ENCODE measurements at regions of chr12 and their contacts with region 1.

Region 1: DNA sequence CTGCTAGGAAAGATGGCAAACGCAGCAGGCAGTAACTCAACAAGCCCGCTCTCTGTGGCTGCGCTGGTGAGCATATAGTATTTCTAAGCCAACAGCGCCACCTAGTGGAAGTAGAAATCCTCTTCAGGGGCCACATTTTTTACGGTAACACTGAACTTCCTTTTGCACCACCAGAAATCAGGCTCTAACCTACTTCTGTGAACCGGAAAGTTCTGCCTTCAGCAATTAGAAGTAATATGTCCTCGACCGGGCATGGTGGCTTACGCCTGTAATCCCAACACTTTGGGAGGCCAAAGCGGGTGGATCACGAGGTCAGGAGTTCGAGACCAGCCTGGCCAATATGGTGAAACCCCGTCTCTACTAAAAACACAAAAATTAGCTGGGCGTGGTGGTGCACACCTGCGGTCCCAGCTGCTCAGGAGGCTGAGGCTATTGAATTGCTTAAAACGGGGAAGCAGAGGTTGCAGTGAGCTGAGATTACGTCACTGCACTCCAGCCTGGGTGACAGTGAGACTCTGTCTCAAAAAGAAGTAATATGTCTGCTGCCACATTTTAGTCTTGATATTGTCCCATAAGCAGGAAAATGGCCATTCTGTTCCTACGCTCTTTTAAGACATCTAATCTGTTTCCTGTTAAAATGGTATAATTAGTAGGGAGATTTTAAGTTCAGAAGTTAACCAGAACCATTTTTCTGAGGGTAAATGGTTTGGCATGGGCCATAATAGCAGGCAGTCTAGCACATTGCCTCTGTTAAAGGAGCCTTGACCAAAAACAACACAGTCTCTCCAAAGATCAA is 26.8 kb downstream of the APOBEC1 start:
- DNase-seq: peak; percentile 78 to 85 (median 83)
- H3K4me3 ChIP-seq: peak overlapping the region in 1 of 2 donors; percentile 25
- H3K4me3 Mint-ChIP-seq: peak overlapping the region; percentile 72 to 88 (median 82)
- H3K27ac ChIP-seq: no peak overlapping the region
- H3K27ac Mint-ChIP-seq: peak overlapping the region; percentile 66 to 93 (median 86)
- H3K4me1 ChIP-seq: peaks cover 24% of the 10 kb centered on the region
- H3K4me1 Mint-ChIP-seq: peaks cover 21 to 33% (median 24%) of the 10 kb centered on the region in 4 donors
- H3K27me3 ChIP-seq: no peaks in the 10 kb centered on the region
- H3K27me3 Mint-ChIP-seq: peaks cover 2 to 8% of the 10 kb centered on the region in 2 donors

Region 2: GRCh38 chr12:7142056-7142644 is 496.8 kb before region 1 on chr12:
- CTCF ChIA-PET with region 1: interaction called, 3 read pairs
- POLR2A ChIA-PET with region 1: no interaction called
- intact Hi-C with region 1: loop called (anchors 1 kb)
- DNase-seq: peak; percentile 40 to 53 (median 44)
- H3K4me3 ChIP-seq: no peak overlapping the region
- H3K4me3 Mint-ChIP-seq: no peak overlapping the region
- H3K27ac ChIP-seq: no peak overlapping the region
- H3K27ac Mint-ChIP-seq: peak overlapping the region in 4 of 7 donors; percentile 16 to 80 (median 43)
- H3K4me1 ChIP-seq: no peaks in the 10 kb centered on the region
- H3K4me1 Mint-ChIP-seq: peaks cover 0 to 12% (median 4%) of the 10 kb centered on the region in 4 donors
- H3K27me3 ChIP-seq: no peaks in the 10 kb centered on the region
- H3K27me3 Mint-ChIP-seq: no peaks in the 10 kb centered on the region

Region 3: GRCh38 chr12:7188562-7189397 is 450.2 kb before region 1 on chr12:
- CTCF ChIA-PET with region 1: interaction called, 3 read pairs
- POLR2A ChIA-PET with region 1: interaction called, 6 read pairs
- intact Hi-C with region 1: loop called (anchors 1 kb)
- DNase-seq: peak; percentile 52 to 64 (median 57)
- H3K4me3 ChIP-seq: peak overlapping the region; percentile 82 to 99
- H3K4me3 Mint-ChIP-seq: peak overlapping the region; percentile 95 to 100 (median 98)
- H3K27ac ChIP-seq: peak overlapping the region; percentile 94
- H3K27ac Mint-ChIP-seq: peak overlapping the region; percentile 96 to 99 (median 99)
- H3K4me1 ChIP-seq: peaks cover 39% of the 10 kb centered on the region
- H3K4me1 Mint-ChIP-seq: peaks cover 23 to 55% (median 37%) of the 10 kb centered on the region in 4 donors
- H3K27me3 ChIP-seq: no peaks in the 10 kb centered on the region
- H3K27me3 Mint-ChIP-seq: no peaks in the 10 kb centered on the region

Region 4: DNA sequence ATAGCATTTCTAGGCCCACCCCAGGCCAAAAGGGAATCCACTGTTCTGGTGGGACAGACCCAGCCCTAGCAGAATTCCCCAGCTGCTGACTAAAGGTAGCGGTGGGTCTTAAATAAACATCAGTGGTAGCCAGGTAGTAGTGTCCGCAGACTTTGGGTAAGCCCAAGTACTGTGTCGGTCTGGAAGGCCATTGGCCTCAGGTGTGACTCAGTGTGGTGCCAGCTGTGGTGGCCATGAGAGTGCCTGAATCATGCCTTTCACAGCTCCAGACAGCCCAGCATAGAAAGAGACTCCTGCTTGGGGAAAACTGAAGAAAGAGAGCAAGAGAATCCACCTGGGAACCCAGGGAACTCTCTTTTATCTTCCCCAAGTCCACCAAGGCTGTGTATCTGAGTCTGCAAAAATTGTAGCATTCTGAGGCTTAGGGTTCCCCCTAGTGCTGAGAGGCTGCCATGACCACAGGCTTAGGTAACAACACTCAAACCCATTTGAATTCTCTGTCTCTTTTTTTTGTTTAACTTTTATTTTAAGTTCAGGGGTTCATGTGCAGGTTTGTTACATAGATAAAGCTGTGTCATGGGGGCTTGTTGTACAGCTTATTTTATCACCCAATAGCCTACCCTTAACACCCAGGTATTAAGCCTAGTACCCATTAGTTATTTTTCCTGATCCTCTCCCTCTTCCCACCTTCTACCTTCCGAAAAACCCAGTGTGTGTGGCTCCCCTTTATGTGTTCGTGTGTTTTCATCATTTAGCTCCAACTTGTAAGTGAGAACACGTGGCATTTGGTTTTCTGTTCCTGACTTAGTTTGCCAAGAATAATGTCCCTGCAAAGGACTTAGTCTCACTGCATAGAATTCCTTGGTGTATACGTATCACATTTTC is 178.3 kb before region 1 on chr12:
- CTCF ChIA-PET with region 1: interaction called, 7 read pairs
- POLR2A ChIA-PET with region 1: no interaction called
- intact Hi-C with region 1: loop called (anchors 1 kb)
- DNase-seq: peak; percentile 45 to 53 (median 50)
- H3K4me3 ChIP-seq: no peak overlapping the region
- H3K4me3 Mint-ChIP-seq: no peak overlapping the region
- H3K27ac ChIP-seq: no peak overlapping the region
- H3K27ac Mint-ChIP-seq: no peak overlapping the region
- H3K4me1 ChIP-seq: no peaks in the 10 kb centered on the region
- H3K4me1 Mint-ChIP-seq: no peaks in the 10 kb centered on the region
- H3K27me3 ChIP-seq: no peaks in the 10 kb centered on the region
- H3K27me3 Mint-ChIP-seq: peaks cover 3% of the 10 kb centered on the region in 2 donors

Region 5: GRCh38 chr12:7512553-7512952 is 126.4 kb before region 1 on chr12:
- CTCF ChIA-PET with region 1: no interaction called
- POLR2A ChIA-PET with region 1: no interaction called
- intact Hi-C with region 1: no loop called
- DNase-seq: no peak
- H3K4me3 ChIP-seq: no peak overlapping the region
- H3K4me3 Mint-ChIP-seq: no peak overlapping the region
- H3K27ac ChIP-seq: no peak overlapping the region
- H3K27ac Mint-ChIP-seq: no peak overlapping the region
- H3K4me1 ChIP-seq: no peaks in the 10 kb centered on the region
- H3K4me1 Mint-ChIP-seq: no peaks in the 10 kb centered on the region
- H3K27me3 ChIP-seq: no peaks in the 10 kb centered on the region
- H3K27me3 Mint-ChIP-seq: peaks cover 15 to 28% of the 10 kb centered on the region in 2 donors

Region 6: GRCh38 chr12:7583571-7583970 is 55.4 kb before region 1 on chr12:
- CTCF ChIA-PET with region 1: interaction called, 36 read pairs
- POLR2A ChIA-PET with region 1: no interaction called
- intact Hi-C with region 1: loop called (anchors 1 kb)
- DNase-seq: no peak
- H3K4me3 ChIP-seq: no peak overlapping the region
- H3K4me3 Mint-ChIP-seq: no peak overlapping the region
- H3K27ac ChIP-seq: no peak overlapping the region
- H3K27ac Mint-ChIP-seq: no peak overlapping the region
- H3K4me1 ChIP-seq: no peaks in the 10 kb centered on the region
- H3K4me1 Mint-ChIP-seq: peaks cover 0 to 2% (median under 1%) of the 10 kb centered on the region in 4 donors
- H3K27me3 ChIP-seq: no peaks in the 10 kb centered on the region
- H3K27me3 Mint-ChIP-seq: peaks cover 18 to 23% of the 10 kb centered on the region in 2 donors

Region 7: GRCh38 chr12:7872566-7873319 is 233.8 kb after region 1 on chr12 and contains the start of gene SLC2A14:
- CTCF ChIA-PET with region 1: no interaction called
- POLR2A ChIA-PET with region 1: no interaction called
- intact Hi-C with region 1: no loop called
- DNase-seq: no peak
- H3K4me3 ChIP-seq: no peak within 1 kb of the TSS
- H3K4me3 Mint-ChIP-seq: peak within 1 kb of the TSS in 2 of 8 donors; percentile 36 to 65
- H3K27ac ChIP-seq: no peak within 1 kb of the TSS
- H3K27ac Mint-ChIP-seq: peak within 1 kb of the TSS in 1 of 7 donors; percentile 9
- H3K4me1 ChIP-seq: no peaks in the 10 kb centered on the region
- H3K4me1 Mint-ChIP-seq: peaks cover 0 to 3% (median 0%) of the 10 kb centered on the region in 4 donors
- H3K27me3 ChIP-seq: no peaks in the 10 kb centered on the region
- H3K27me3 Mint-ChIP-seq: peaks cover 21 to 22% of the 10 kb centered on the region in 2 donors
- total RNA-seq, gene SLC2A14: 3.5 TPM

Measured in CD4-positive, alpha-beta memory T cell (primary cell).